ENCODE measurements at regions of chr13 and their contacts with region 1.

Region 1: DNA sequence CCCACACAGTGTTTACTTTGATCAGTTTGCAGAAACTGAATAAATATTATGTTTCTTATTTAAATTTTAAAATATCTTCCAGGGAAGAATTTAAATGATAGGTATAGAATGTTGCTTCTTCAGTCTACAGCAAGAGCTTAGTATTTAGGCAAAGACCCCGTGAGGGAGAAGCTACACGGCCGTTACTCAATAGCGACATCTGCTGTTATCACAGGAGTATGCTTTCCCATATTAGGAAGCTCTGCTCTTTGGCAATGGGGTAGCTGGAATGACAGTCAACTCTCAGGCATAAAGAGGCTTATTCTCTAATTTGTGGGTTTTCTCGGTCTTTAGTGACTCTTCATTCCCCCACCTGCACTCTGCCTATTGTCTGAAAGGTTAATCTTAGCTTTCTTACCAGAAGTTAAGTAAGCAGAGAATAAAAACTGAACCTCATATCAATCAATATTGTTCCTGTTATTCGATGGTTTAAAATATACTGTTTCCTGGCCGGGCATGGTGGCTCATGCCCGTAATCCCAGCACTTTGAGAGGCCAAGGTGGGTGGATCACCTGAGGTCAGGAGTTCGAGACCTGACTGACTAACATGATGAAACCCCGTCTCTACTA is 13.2 kb upstream of the LHFPL6 start:
- DNase-seq: peak in 3 of 5 donors; percentile 29 to 64 (median 50)
- H3K4me3 ChIP-seq: no peak overlapping the region
- H3K27ac ChIP-seq: no peak overlapping the region
- H3K4me1 ChIP-seq: no peaks in the 10 kb centered on the region
- H3K27me3 ChIP-seq: no peaks in the 10 kb centered on the region
- CTCF ChIP-seq: peak; percentile 61 to 74 (median 64)
- EP300 ChIP-seq: no peak
- POLR2A ChIP-seq: no peak

Region 2: GRCh38 chr13:39051157-39051556 is 565.0 kb before region 1 on chr13:
- intact Hi-C with region 1: loop called in 3 of 4 experiments (anchors 10 kb)
- DNase-seq: no peak
- H3K4me3 ChIP-seq: no peak overlapping the region
- H3K27ac ChIP-seq: no peak overlapping the region
- H3K4me1 ChIP-seq: no peaks in the 10 kb centered on the region
- H3K27me3 ChIP-seq: peaks cover 7% of the 10 kb centered on the region
- CTCF ChIP-seq: peak in 1 of 3 donors; percentile 29
- EP300 ChIP-seq: no peak
- POLR2A ChIP-seq: no peak

Region 3: DNA sequence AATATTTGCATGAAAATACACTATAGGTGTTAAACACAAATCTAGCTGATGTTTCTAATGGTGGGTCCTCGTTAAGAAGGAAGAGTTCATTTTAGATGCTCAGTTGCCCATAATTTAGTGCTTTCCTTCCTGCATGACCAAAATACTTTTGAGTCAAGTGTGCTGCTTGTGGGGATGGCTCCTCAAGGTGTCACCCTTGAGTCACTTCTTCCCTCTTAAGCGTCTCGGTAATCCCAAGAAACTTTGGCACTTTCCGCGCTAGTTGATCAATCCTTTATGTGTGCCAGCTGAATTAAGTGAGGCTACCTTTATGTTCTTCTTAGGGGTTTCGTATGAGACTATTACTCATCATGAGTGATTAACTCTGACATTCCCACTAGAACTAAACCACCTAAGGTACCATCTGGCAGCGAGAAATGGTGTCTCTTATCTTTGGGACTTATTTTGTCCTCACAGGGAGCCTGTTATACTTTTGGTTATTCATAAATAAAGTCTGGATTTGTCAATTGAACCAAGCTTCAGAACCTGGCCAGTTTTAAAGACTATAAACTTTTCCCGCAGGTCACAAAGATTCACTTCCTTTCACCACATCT is 471.2 kb before region 1 on chr13:
- intact Hi-C with region 1: loop called in 2 of 4 experiments (anchors 2 kb)
- DNase-seq: peak; percentile 44 to 74 (median 55)
- H3K4me3 ChIP-seq: no peak overlapping the region
- H3K27ac ChIP-seq: no peak overlapping the region
- H3K4me1 ChIP-seq: no peaks in the 10 kb centered on the region
- H3K27me3 ChIP-seq: no peaks in the 10 kb centered on the region
- CTCF ChIP-seq: peak in 2 of 3 donors; percentile 59 to 65
- EP300 ChIP-seq: no peak
- POLR2A ChIP-seq: no peak

Region 4: GRCh38 chr13:39263033-39263432 is 353.2 kb before region 1 on chr13:
- intact Hi-C with region 1: loop called in 1 of 4 experiments (anchors 10 kb)
- DNase-seq: peak in 2 of 5 donors; percentile 23 to 38
- H3K4me3 ChIP-seq: no peak overlapping the region
- H3K27ac ChIP-seq: no peak overlapping the region
- H3K4me1 ChIP-seq: peaks cover 2% of the 10 kb centered on the region
- H3K27me3 ChIP-seq: no peaks in the 10 kb centered on the region
- CTCF ChIP-seq: peak in 1 of 3 donors; percentile 48
- EP300 ChIP-seq: no peak
- POLR2A ChIP-seq: no peak

Region 5: DNA sequence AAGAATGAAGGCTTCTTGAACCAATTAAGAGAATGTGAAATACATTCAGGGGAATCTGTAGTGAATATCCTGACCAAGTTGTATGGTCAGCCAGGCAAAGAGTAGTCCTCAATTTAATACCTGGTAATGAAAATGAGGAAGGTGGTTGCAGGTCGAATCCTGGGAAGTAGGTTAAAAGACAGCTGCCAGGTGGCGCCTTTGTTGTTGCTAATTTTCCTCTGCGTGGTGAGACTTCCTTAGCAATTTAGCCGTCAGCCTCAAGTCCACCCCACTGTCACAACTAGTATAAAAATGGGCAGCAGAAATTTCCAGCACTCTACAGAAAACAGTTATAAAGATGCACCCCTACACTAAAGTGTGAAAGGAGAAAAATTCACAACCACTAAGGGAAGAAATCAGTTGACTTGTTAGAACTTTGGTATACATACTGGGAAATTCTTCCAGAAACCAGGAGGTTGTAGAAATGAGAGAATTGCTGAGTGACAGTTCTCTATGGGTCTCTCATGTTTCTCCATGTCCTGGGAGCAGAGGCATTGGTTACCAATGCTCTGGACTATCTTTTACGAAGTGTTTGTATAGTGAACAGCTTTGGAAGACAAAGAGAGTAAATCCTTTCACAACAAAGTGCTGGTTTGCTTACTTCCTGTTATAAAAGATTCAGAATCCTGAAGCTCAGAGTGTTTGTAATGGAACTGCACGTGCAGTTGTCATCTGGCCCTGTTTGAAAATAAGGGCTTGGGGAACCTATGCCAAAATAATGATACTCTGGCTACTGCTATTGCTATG is 342.0 kb before region 1 on chr13:
- intact Hi-C with region 1: loop called in 2 of 4 experiments (anchors 10 kb)
- DNase-seq: peak in 2 of 5 donors; percentile 22 to 23
- H3K4me3 ChIP-seq: no peak overlapping the region
- H3K27ac ChIP-seq: no peak overlapping the region
- H3K4me1 ChIP-seq: no peaks in the 10 kb centered on the region
- H3K27me3 ChIP-seq: no peaks in the 10 kb centered on the region
- CTCF ChIP-seq: no peak
- EP300 ChIP-seq: no peak
- POLR2A ChIP-seq: no peak

Region 6: DNA sequence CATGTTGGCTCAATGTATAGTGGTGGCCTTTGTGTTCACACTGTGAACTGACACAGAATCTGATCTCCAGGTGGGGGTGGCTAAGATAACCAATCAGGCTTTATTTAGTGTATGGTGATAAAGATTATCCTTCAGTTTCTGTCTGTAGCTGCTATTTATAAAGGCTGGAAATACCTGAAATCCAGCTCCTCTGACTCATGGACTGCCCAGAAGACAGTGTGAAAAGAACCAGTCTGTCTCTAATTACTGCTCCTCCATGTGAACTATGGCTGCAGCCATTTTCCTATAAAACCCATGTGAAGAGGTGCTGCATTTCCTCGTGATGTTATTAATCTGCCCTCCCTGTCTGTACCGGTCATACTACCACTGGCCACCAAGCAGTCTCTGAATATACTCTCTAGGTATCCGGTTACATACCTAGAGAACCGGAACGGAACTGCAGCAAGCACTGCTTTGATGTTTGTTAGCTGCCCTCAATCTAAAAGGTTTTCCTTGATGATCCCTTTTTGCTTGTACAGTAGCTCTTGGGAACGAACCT is 251.2 kb before region 1 on chr13:
- intact Hi-C with region 1: no loop called
- DNase-seq: no peak
- H3K4me3 ChIP-seq: peak overlapping the region; percentile 7
- H3K27ac ChIP-seq: no peak overlapping the region
- H3K4me1 ChIP-seq: peaks cover 7% of the 10 kb centered on the region
- H3K27me3 ChIP-seq: no peaks in the 10 kb centered on the region
- CTCF ChIP-seq: no peak
- EP300 ChIP-seq: no peak
- POLR2A ChIP-seq: no peak

Measured in ovary (tissue), 10 donors.